ENCODE measurements at regions of chr20 and their contacts with region 1.

Region 1: GRCh38 chr20:10495173-10495572 is 60.1 kb downstream of the SLX4IP start:
- DNase-seq: no peak
- ATAC-seq: no peak
- H3K4me3 ChIP-seq: no peak overlapping the region
- H3K27ac ChIP-seq: no peak overlapping the region
- H3K4me1 ChIP-seq: 0 out of 2 replicates have a peak, but pooled peaks cover 3% of the 10 kb centered on the region
- H3K27me3 ChIP-seq: no peaks in the 10 kb centered on the region
- CTCF ChIP-seq: no peak

Region 2: DNA sequence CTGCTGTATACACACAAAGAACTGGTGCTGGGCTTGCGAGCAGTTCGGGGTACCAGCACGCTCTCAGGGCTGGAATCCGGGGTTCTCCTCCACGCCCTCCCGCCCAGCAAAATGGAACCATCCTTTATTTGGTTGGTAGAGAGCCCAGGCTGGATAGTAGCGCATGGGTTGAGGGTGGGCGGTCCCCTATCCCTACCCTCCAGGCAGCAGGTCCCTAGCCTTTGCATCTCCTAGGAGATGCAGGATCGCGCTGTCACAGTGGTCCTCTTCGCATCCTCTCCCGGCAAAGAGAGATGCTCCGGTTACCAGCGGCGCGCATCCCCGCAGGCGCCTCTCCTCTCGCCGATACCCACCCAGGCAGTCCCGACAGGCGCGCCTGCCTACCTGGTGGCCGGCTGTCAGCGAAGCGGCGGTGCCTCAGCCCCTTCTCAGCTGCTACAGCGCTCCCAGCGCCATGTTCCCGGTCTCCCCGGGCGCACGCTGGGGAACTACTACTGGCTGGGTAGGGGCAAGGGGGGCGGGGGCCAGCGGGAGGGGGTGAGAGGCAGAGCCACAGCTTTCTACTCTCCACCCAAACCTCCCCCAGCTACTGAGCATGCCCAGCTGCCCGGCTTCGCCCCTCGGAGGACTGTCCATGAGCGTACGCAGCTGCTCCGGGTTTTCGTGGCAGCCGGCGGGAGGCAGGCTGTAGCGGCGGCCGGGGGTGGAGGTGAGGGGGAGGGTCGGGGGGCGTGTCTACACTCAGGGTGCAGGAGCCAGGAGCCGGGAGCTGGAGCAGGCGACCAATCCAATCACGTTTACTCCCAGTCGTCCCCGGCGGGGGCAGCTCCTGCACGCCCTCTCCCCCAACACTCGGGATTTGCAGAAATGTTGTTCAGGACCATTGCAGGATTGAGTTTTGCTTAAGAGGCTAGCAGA is 656.5 kb before region 1 on chr20 and contains the start of gene PAK5:
- CTCF ChIA-PET with region 1: no interaction called
- POLR2A ChIA-PET with region 1: no interaction called
- intact Hi-C with region 1: no loop called
- DNase-seq: no peak
- ATAC-seq: no peak
- H3K4me3 ChIP-seq: no peak within 1 kb of the TSS
- H3K27ac ChIP-seq: no peak within 1 kb of the TSS
- H3K4me1 ChIP-seq: no peaks in the 10 kb centered on the region
- H3K27me3 ChIP-seq: peaks cover 71% of the 10 kb centered on the region
- CTCF ChIP-seq: no peak
- total RNA-seq, gene PAK5: not detected in 2 replicates

Region 3: GRCh38 chr20:10357974-10358373 is 137.2 kb before region 1 on chr20:
- CTCF ChIA-PET with region 1: no interaction called
- POLR2A ChIA-PET with region 1: no interaction called
- intact Hi-C with region 1: no loop called
- DNase-seq: no peak
- ATAC-seq: no peak
- H3K4me3 ChIP-seq: no peak overlapping the region
- H3K27ac ChIP-seq: no peak overlapping the region
- H3K4me1 ChIP-seq: no peaks in the 10 kb centered on the region
- H3K27me3 ChIP-seq: peaks cover 26% of the 10 kb centered on the region
- CTCF ChIP-seq: peak; percentile 57

Region 4: DNA sequence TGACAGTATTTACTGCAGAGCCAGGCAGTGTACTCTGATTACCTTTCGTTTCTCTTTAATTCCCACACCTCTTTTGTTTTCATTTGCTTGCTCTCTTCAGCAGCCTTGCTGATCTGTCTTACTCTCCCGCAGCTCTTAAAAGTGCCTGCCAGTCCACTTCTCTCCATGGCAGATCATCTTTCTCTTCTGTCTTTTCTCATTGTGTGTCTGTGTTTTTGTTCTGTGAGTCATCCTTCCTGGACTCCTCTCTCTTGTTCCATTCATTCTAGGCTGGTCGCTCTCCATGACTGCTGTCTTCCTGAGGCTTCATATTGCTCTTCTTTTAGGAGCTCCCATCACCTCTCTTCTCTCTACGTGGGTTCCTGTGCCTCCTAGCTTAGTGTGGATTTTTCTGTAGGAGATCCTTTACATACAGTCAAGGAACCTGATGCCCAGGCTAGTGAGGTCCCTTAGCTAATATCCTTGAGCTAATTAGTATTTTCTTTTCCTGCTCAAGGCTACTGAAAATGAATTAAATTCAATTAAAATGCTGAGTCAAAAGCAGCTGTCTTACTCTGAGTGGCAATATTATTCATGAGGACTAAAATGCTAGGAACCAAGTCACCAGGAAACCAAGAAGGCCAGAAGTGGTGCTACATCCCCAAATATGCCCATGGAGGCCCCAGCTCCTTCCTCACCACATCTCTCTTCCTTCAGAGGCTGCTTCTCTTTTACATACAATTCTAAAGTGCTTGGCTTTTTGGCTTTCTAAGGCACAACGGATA is 26.1 kb after region 1 on chr20:
- CTCF ChIA-PET with region 1: no interaction called
- POLR2A ChIA-PET with region 1: no interaction called
- intact Hi-C with region 1: loop called (anchors 2 kb)
- DNase-seq: peak; percentile 84
- ATAC-seq: peak; percentile 75
- H3K4me3 ChIP-seq: no peak overlapping the region
- H3K27ac ChIP-seq: peak overlapping the region; percentile 44
- H3K4me1 ChIP-seq: peaks cover 59% of the 10 kb centered on the region
- H3K27me3 ChIP-seq: no peaks in the 10 kb centered on the region
- CTCF ChIP-seq: no peak

Measured in PC-3 (cell line).